ENCODE measurements at regions of chr7 and their contacts with region 1.

Region 1: DNA sequence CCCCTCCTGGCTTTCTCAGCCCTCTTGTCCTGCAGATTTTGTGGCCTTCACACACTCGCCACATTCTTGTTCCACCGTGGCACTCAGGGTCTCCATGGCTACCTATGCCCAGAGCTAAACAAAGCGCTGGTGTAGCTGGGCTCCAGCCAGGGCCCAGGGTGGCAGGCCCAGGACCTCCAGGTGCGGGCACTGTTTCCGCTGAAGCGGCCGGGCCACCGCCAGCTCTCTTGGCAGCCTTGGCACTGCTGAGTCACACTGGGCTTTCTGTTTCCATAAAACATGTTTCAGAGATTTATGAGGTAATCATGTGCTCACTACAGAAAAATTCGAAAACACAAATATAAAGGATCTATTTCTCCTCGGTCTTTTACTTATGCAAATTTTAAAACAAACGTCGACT is 51.3 kb downstream of the AOC1 start:
- DNase-seq: peak; percentile 86
- H3K4me3 ChIP-seq: no peak overlapping the region
- H3K27ac ChIP-seq: peak overlapping the region; percentile 54 to 73 (median 72)
- H3K4me1 ChIP-seq: peaks cover 23 to 43% (median 40%) of the 10 kb centered on the region in 4 donors
- H3K27me3 ChIP-seq: no peaks in the 10 kb centered on the region
- CTCF ChIP-seq: no peak
- EP300 ChIP-seq: no peak
- POLR2A ChIP-seq: no peak

Region 2: GRCh38 chr7:150955519-150956394 is 52.2 kb after region 1 on chr7:
- intact Hi-C with region 1: loop called (anchors 5 kb)
- DNase-seq: no peak
- H3K4me3 ChIP-seq: peak overlapping the region; percentile 37 to 49 (median 44)
- H3K27ac ChIP-seq: peak overlapping the region; percentile 77 to 88 (median 84)
- H3K4me1 ChIP-seq: peaks cover 47 to 69% (median 60%) of the 10 kb centered on the region in 4 donors
- H3K27me3 ChIP-seq: peaks cover 0 to 5% (median 0%) of the 10 kb centered on the region in 4 donors
- CTCF ChIP-seq: peak in 1 of 3 experiments; percentile 33
- EP300 ChIP-seq: no peak
- POLR2A ChIP-seq: no peak

Region 3: GRCh38 chr7:151068068-151068773 is 164.6 kb after region 1 on chr7:
- intact Hi-C with region 1: no loop called
- DNase-seq: no peak
- H3K4me3 ChIP-seq: no peak overlapping the region
- H3K27ac ChIP-seq: no peak overlapping the region
- H3K4me1 ChIP-seq: peaks cover 9 to 12% (median 10%) of the 10 kb centered on the region in 4 donors
- H3K27me3 ChIP-seq: no peaks in the 10 kb centered on the region
- CTCF ChIP-seq: no peak
- EP300 ChIP-seq: no peak
- POLR2A ChIP-seq: no peak

Region 4: DNA sequence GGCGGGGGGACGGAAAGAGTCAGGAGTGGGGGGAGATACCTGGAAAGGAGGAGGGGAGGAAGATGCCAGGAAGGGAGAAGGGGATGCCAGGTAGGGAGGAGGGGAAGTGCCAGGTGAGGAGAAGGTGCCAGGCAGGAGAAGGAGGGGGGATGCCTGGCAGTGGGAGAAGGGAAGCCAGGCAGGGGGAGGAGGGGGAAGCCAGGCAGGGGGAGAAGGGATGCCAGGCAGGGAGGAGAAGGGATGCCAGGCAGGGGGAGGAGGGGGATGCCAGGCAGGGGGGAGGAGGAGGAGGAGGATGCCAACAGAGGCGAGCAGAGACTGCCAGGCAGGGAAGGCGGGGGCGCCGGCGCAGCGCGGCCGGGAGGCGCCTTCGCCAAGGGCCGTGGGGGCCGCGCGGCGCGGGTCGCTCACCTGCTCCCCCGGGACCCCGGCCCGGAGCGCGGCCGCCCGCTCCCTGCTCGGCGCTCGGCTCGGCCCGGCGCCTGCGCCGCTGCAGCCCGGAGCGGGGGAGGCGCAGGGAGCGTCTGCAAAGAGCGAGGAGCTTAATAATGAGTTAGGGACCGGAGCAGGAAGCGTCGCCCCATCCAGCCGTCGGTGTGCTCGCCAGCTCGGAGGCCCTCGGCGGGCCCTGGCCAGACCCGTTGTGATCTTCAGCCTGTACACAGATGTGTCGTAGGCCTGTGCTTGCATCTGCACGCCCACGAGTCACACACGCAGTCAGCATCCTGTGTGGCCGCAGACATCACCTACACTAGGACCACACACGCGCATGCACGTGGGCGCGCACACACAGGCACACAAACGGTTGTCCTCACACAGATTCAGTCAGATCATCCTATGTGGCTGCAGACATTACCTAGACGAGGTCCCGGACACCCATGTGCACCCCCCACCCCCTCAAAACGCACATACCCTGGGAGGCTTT is 373.3 kb after region 1 on chr7:
- intact Hi-C with region 1: no loop called
- DNase-seq: no peak
- H3K4me3 ChIP-seq: peak overlapping the region; percentile 49 to 71 (median 54)
- H3K27ac ChIP-seq: peak overlapping the region; percentile 29 to 52 (median 39)
- H3K4me1 ChIP-seq: peaks cover 5 to 44% (median 26%) of the 10 kb centered on the region in 4 donors
- H3K27me3 ChIP-seq: no peaks in the 10 kb centered on the region
- CTCF ChIP-seq: no peak
- EP300 ChIP-seq: no peak
- POLR2A ChIP-seq: no peak

Measured in esophagus muscularis mucosa (tissue), 4 donors.